MCF 10A (cell line): ENCODE measurements at regions of chr14 and their contacts with region 1.

Region 1: DNA sequence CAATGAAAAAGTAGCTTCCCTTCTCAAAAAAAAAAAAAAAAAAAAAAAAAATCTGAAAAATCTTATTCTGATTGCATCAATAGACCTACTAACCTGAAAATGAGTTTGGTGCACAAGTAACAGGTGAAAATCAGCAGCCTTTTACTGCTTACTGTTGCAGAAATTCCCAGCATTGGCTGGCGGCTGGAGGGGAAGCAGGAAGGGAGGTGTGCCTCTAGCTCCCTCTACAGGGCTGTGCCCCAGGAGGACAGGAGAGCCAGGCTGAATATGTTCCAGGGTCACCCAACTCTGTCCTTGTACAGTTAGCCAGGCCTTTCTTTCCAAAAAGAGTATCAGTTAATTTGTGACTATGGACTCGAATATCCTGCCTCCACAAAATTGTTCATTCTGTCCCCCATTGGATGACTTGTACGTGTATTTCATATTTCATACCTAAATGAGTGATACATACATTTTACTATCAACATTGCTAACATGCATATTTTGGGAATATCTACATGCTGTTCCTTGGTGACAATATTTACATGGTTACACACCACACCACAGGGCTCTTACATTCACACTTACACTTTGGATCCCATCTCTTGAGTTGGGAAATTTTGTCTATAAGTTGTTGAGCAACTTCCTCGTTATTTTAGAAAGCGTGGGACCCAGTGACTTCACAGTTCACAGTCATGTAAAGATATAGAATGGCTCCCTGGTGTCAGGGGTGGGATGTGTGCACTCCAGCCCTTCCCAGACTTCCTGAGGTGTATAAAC is 124.8 kb downstream of the SAMD4A start:
- DNase-seq: peak; percentile 79
- H3K4me3 Mint-ChIP-seq: no peak overlapping the region
- H3K27ac Mint-ChIP-seq: no peak overlapping the region
- H3K4me1 Mint-ChIP-seq: peaks cover 27% of the 10 kb centered on the region
- H3K27me3 Mint-ChIP-seq: no peaks in the 10 kb centered on the region
- CTCF ChIP-seq: peak; percentile 82

Region 2: DNA sequence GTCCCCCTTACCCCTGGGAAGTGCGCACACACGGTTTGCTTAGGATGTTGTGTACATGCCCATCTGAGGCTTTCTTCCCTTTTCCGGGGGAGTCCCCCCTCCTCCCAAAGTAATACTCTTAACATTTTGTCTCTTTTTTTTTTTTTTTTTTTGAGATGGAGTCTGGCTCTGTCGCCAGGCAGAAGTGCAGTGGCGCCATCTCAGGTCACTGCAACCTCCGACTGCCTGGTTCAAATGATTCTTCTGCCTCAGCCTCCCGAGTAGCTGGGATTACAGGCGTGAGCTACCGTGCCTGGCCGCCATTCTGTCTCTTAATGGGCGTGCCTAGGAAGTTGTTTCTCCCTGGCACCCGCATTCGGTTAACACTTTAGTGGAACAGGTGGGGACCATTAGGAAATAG is 198.4 kb before region 1 on chr14:
- CTCF ChIA-PET with region 1: no interaction called
- POLR2A ChIA-PET with region 1: no interaction called
- intact Hi-C with region 1: no loop called
- DNase-seq: no peak
- H3K4me3 Mint-ChIP-seq: no peak overlapping the region
- H3K27ac Mint-ChIP-seq: no peak overlapping the region
- H3K4me1 Mint-ChIP-seq: no peaks in the 10 kb centered on the region
- H3K27me3 Mint-ChIP-seq: no peaks in the 10 kb centered on the region
- CTCF ChIP-seq: no peak

Region 3: GRCh38 chr14:54572316-54572715 is 119.4 kb before region 1 on chr14:
- CTCF ChIA-PET with region 1: interaction called, 97 read pairs
- POLR2A ChIA-PET with region 1: interaction called, 95 read pairs
- intact Hi-C with region 1: no loop called
- DNase-seq: peak; percentile 60
- H3K4me3 Mint-ChIP-seq: no peak overlapping the region
- H3K27ac Mint-ChIP-seq: peak overlapping the region; percentile 67
- H3K4me1 Mint-ChIP-seq: peaks cover 28% of the 10 kb centered on the region
- H3K27me3 Mint-ChIP-seq: no peaks in the 10 kb centered on the region
- CTCF ChIP-seq: peak; percentile 43

Region 4: GRCh38 chr14:54577977-54578376 is 113.7 kb before region 1 on chr14:
- CTCF ChIA-PET with region 1: interaction called, 13 read pairs
- POLR2A ChIA-PET with region 1: no interaction called
- intact Hi-C with region 1: no loop called
- DNase-seq: no peak
- H3K4me3 Mint-ChIP-seq: no peak overlapping the region
- H3K27ac Mint-ChIP-seq: no peak overlapping the region
- H3K4me1 Mint-ChIP-seq: peaks cover 28% of the 10 kb centered on the region
- H3K27me3 Mint-ChIP-seq: no peaks in the 10 kb centered on the region
- CTCF ChIP-seq: no peak

Region 5: DNA sequence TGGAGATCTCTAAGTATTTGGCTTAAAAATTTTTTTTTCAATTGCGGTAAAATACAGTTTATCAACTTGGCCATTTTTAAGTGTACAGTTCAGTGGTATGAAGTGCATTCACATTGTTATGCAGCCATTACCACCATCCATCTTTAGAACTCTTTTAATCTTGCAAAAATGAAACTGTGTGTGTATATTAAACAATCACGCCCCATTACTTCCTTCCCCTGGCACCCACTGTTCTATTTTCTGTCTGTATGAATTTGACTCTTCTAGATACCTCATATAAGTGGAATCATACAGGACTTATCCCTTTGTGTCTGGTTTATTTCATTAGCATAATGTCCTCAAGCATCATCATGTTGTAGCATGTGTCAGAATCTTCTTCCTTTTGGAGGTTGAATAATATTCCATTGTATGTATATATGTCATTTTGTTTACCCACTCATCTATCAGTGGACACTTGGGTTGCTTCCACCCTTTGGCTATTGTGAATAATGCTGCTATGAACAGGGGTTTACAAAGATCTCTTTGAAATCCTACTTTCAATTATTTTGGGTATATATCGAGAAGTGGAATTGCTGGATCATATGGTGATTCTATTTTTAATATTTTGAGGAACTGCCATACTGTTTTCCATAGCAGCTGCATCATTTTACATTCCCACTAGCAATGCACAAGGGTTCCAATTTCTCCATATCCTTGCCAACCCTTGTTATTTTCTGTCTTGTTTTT is 61.9 kb before region 1 on chr14:
- CTCF ChIA-PET with region 1: interaction called, 12 read pairs
- POLR2A ChIA-PET with region 1: interaction called, 3 read pairs
- intact Hi-C with region 1: no loop called
- DNase-seq: no peak
- H3K4me3 Mint-ChIP-seq: no peak overlapping the region
- H3K27ac Mint-ChIP-seq: no peak overlapping the region
- H3K4me1 Mint-ChIP-seq: peaks cover 17% of the 10 kb centered on the region
- H3K27me3 Mint-ChIP-seq: no peaks in the 10 kb centered on the region
- CTCF ChIP-seq: no peak

Region 6: GRCh38 chr14:54652188-54652587 is 39.5 kb before region 1 on chr14:
- CTCF ChIA-PET with region 1: interaction called, 10 read pairs
- POLR2A ChIA-PET with region 1: interaction called, 5 read pairs
- intact Hi-C with region 1: loop called (anchors 1 kb)
- DNase-seq: peak; percentile 90
- H3K4me3 Mint-ChIP-seq: peak overlapping the region; percentile 63
- H3K27ac Mint-ChIP-seq: peak overlapping the region; percentile 80
- H3K4me1 Mint-ChIP-seq: peaks cover 40% of the 10 kb centered on the region
- H3K27me3 Mint-ChIP-seq: no peaks in the 10 kb centered on the region
- CTCF ChIP-seq: no peak

Region 7: GRCh38 chr14:54676812-54677708 is 14.6 kb before region 1 on chr14:
- CTCF ChIA-PET with region 1: interaction called, 8 read pairs
- POLR2A ChIA-PET with region 1: interaction called, 42 read pairs
- intact Hi-C with region 1: no loop called
- DNase-seq: peak; percentile 92
- H3K4me3 Mint-ChIP-seq: peak overlapping the region; percentile 14
- H3K27ac Mint-ChIP-seq: peak overlapping the region; percentile 86
- H3K4me1 Mint-ChIP-seq: peaks cover 31% of the 10 kb centered on the region
- H3K27me3 Mint-ChIP-seq: no peaks in the 10 kb centered on the region
- CTCF ChIP-seq: no peak